MCF 10A (cell line): ENCODE measurements at regions of chr3 and their contacts with region 1.

Region 1: DNA sequence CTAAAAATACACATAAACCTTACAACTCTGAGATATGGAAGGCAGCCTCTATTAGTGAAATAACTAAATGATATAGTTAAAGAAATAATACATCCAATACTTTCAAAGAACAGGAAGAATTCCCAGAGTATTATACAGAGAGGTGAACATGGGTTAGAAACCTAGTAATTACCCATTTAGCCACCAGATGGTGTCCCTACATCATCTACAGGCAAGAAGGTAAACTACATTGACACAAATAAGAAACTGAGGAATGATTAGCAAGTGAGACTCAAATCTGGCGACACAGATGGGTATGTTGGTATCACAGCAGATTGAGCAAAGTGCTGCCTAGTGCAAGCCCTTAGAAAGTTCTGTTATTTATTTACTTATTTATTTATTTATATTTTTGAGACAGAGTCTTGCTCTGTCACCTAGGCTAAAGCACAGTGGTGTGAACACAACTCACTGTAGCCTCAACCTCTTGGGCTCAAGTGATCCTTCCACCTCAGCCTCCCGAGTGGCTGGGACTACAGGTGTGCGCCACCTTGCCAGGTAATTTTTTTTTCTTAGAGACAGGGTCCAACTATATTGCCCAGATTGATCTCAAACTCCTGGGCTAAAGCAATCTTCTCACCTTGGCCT is 28.2 kb downstream of the NEK4 start:
- DNase-seq: peak; percentile 51
- H3K4me3 Mint-ChIP-seq: no peak overlapping the region
- H3K27ac Mint-ChIP-seq: no peak overlapping the region
- H3K4me1 Mint-ChIP-seq: no peaks in the 10 kb centered on the region
- H3K27me3 Mint-ChIP-seq: no peaks in the 10 kb centered on the region
- CTCF ChIP-seq: peak; percentile 75

Region 2: DNA sequence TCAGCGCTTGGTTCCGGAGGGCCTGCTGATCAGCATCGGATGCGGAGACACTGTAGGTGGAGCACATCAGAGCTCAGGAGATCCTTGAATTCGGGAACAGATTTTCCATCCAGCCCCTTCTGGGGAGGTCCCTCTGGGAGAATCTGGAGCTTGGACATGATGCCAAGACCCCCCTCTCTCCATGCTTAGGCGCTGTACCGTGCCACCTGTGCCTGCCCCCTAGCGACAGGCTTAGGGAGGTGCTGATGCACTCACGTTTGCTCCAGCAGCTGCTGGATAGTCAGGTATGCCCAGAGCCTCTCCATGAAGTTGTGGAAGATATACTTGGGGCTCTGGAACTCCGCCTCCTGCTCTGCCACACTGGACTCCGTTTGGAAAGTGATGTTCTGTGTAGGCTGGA is 78.2 kb after region 1 on chr3:
- CTCF ChIA-PET with region 1: interaction called, 3 read pairs
- POLR2A ChIA-PET with region 1: no interaction called
- intact Hi-C with region 1: loop called (anchors 2 kb)
- DNase-seq: peak; percentile 52
- H3K4me3 Mint-ChIP-seq: no peak overlapping the region
- H3K27ac Mint-ChIP-seq: no peak overlapping the region
- H3K4me1 Mint-ChIP-seq: no peaks in the 10 kb centered on the region
- H3K27me3 Mint-ChIP-seq: no peaks in the 10 kb centered on the region
- CTCF ChIP-seq: peak; percentile 63

Region 3: GRCh38 chr3:52897130-52898122 is 154.9 kb after region 1 on chr3 and contains the start of gene STIMATE:
- CTCF ChIA-PET with region 1: no interaction called
- POLR2A ChIA-PET with region 1: no interaction called
- intact Hi-C with region 1: loop called (anchors 1 kb)
- DNase-seq: peak; percentile 80
- H3K4me3 Mint-ChIP-seq: peak within 1 kb of the TSS; percentile 86
- H3K27ac Mint-ChIP-seq: no peak within 1 kb of the TSS
- H3K4me1 Mint-ChIP-seq: peaks cover 13% of the 10 kb centered on the region
- H3K27me3 Mint-ChIP-seq: no peaks in the 10 kb centered on the region
- CTCF ChIP-seq: no peak
- total RNA-seq, gene STIMATE: 12.0 and 12.9 TPM in 2 replicates

Region 4: GRCh38 chr3:52934630-52935530 is 192.3 kb after region 1 on chr3:
- CTCF ChIA-PET with region 1: interaction called, 14 read pairs
- POLR2A ChIA-PET with region 1: interaction called, 3 read pairs
- intact Hi-C with region 1: loop called (anchors 1 kb)
- DNase-seq: peak; percentile 68
- H3K4me3 Mint-ChIP-seq: no peak overlapping the region
- H3K27ac Mint-ChIP-seq: no peak overlapping the region
- H3K4me1 Mint-ChIP-seq: no peaks in the 10 kb centered on the region
- H3K27me3 Mint-ChIP-seq: no peaks in the 10 kb centered on the region
- CTCF ChIP-seq: peak; percentile 53

Region 5: DNA sequence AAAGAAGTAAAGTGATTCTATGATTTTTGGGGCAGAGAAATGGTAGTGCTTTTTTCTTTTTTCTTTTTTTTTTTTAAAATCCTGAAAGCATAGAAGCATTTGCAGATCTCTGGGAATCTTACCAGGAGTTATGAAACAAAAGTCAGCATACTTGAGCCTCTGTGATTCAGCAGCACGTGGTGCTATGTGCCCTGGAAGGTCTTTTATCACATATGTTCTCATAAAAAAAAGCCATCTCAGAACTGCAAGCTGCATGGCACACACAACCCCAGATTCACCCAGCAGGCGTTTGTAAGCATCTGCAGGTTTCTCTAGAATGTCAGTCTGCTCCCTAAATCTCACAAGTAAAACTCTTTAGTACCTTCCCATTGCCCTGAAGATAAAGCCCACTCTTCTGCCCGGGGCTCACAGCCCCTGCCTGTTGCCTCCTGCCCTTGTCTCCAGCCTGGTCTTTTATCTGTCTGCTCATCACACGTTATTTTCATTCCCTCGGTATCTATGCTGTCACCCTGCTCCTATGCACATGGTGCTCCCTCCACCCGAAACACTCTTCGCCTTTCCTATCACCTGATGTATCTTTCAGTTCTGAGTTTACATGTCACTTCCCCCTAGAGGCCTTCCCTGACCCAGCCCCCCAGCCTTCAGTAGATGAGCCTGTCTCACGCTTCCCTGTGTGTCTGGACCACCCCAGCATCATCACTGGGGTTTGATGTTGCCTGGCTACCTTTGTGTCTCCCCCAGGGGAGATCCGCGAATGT is 1031.3 kb after region 1 on chr3:
- CTCF ChIA-PET with region 1: no interaction called
- POLR2A ChIA-PET with region 1: no interaction called
- intact Hi-C with region 1: no loop called
- DNase-seq: peak; percentile 42
- H3K4me3 Mint-ChIP-seq: no peak overlapping the region
- H3K27ac Mint-ChIP-seq: no peak overlapping the region
- H3K4me1 Mint-ChIP-seq: peaks cover 22% of the 10 kb centered on the region
- H3K27me3 Mint-ChIP-seq: peaks cover 12% of the 10 kb centered on the region
- CTCF ChIP-seq: no peak